OCI-LY7 (cell line): ENCODE measurements at regions of chr4 and their contacts with region 1.

Region 1: GRCh38 chr4:120796271-120796670 is 126.3 kb downstream of the PRDM5 start:
- DNase-seq: no peak
- H3K4me3 ChIP-seq: no peak overlapping the region
- H3K27ac ChIP-seq: no peak overlapping the region
- H3K4me1 ChIP-seq: peaks cover 12% of the 10 kb centered on the region
- CTCF ChIP-seq: no peak

Region 2: DNA sequence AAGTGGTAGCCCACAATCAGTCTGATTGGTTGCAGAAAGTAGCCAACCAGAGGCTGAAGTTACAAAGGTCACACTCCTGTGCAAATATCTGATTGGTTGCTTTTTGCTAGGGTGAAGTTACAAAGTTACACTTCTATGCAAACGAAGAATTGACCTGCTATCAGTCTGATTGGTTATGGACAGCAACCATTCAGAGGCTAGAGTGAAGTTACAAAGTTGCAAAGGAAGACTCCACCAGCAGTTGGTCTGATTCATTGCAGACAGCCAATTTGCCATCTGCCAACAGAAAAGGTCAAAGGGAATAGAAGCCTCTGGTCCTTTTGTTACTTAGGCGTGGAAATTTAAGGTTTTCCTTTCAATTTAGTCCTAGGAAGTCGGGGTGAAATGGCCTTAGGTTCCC is 251.4 kb before region 1 on chr4:
- CTCF ChIA-PET with region 1: no interaction called
- POLR2A ChIA-PET with region 1: no interaction called
- intact Hi-C with region 1: no loop called
- DNase-seq: no peak
- H3K4me3 ChIP-seq: no peak overlapping the region
- H3K27ac ChIP-seq: no peak overlapping the region
- H3K4me1 ChIP-seq: no peaks in the 10 kb centered on the region
- CTCF ChIP-seq: no peak

Region 3: GRCh38 chr4:120777459-120777858 is 18.8 kb before region 1 on chr4:
- CTCF ChIA-PET with region 1: no interaction called
- POLR2A ChIA-PET with region 1: interaction called, 12 read pairs
- intact Hi-C with region 1: no loop called
- DNase-seq: no peak
- H3K4me3 ChIP-seq: no peak overlapping the region
- H3K27ac ChIP-seq: no peak overlapping the region
- H3K4me1 ChIP-seq: peaks cover 38% of the 10 kb centered on the region
- CTCF ChIP-seq: no peak